ENCODE measurements at regions of chr3 and their contacts with region 1.

Region 1: GRCh38 chr3:170307671-170308403 is 49.7 kb upstream of the SKIL start:
- DNase-seq: no peak
- ATAC-seq: no peak
- H3K4me3 ChIP-seq: no peak overlapping the region
- H3K27ac ChIP-seq: no peak overlapping the region
- H3K4me1 ChIP-seq: no peaks in the 10 kb centered on the region
- H3K27me3 ChIP-seq: no peaks in the 10 kb centered on the region
- CTCF ChIP-seq: no peak

Region 2: GRCh38 chr3:170357176-170357919 is 49.5 kb after region 1 on chr3 and contains the start of gene SKIL:
- intact Hi-C with region 1: loop called in 1 of 2 experiments (anchors 5 kb)
- DNase-seq: peak; percentile 98 to 99
- ATAC-seq: peak; percentile 85 to 88 (median 86)
- H3K4me3 ChIP-seq: peak within 1 kb of the TSS; percentile 82
- H3K27ac ChIP-seq: peak within 1 kb of the TSS; percentile 93
- H3K4me1 ChIP-seq: peaks cover 28% of the 10 kb centered on the region
- H3K27me3 ChIP-seq: no peaks in the 10 kb centered on the region
- CTCF ChIP-seq: peak; percentile 31
- total RNA-seq, gene SKIL: 30.1 to 46.6 (median 40.2) TPM

Region 3: DNA sequence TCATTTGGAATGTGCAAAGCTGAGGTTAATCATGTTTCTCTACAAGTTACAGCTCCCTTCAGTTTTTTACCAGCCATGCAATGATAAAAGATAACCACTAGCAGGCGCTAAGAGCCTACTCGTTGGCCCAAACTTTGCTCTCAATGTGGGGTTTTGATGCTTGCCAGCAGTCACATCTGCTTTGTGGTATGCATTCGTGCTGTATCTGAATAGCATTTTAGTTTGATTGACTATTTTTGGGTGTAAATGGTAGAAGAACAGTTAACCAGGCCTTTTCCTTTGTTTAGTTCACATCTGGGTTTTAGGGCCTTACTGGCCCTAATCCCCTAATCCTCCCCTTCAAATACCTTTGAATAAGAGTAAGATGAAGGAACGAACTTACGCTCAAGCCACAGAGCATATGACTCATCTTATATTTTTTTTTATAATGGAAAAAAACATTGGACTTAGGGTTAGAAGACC is 106.4 kb after region 1 on chr3:
- intact Hi-C with region 1: loop called (anchors 2 to 5 kb)
- DNase-seq: no peak
- ATAC-seq: peak in 3 of 4 donors; percentile 46 to 74 (median 52)
- H3K4me3 ChIP-seq: no peak overlapping the region
- H3K27ac ChIP-seq: no peak overlapping the region
- H3K4me1 ChIP-seq: peaks cover 8% of the 10 kb centered on the region
- H3K27me3 ChIP-seq: peaks cover 0 to 30% (median 7%) of the 10 kb centered on the region in 3 donors
- CTCF ChIP-seq: peak; percentile 83

Region 4: DNA sequence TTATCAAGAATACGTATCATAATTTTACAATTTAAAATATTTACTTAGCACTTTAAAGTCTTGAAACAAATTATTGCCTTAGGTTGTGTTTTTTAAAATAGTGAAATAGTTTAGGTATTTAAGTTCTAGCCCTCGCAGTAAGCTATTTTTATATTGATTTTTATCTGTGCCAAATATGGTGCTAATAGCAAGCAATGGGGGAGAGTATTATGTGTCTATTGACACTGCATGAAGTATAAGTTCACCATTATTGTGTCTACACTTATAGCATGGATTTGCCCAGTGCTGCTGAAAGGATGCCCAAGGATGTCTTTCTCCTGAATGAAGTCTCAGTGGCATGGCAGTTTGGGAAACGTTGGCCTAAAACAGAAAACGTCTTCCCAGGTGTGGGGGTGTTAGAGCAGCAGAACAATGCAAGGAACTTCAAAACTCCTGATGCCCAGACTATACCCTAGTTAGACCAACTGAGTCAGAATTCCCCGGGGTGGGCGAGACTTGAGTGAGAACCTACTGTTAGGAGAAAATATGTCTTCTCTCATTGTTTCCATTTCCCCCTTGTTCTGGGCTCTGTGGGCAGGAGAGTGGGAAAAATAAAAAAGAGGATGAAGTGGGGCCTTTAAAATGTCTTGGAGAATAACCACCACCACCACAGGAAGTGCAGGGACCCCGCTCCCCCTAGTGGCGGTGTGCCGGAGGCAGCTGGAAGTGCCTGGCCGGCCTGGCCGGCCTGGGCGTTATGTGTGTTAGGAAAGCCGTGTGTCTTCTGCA is 382.2 kb after region 1 on chr3:
- intact Hi-C with region 1: loop called in 1 of 2 experiments (anchors 2 kb)
- DNase-seq: peak; percentile 69 to 79
- ATAC-seq: peak; percentile 71 to 91 (median 80)
- H3K4me3 ChIP-seq: no peak overlapping the region
- H3K27ac ChIP-seq: no peak overlapping the region
- H3K4me1 ChIP-seq: peaks cover 10% of the 10 kb centered on the region
- H3K27me3 ChIP-seq: no peaks in the 10 kb centered on the region
- CTCF ChIP-seq: peak; percentile 59

Region 5: GRCh38 chr3:170811928-170812591 is 504.2 kb after region 1 on chr3:
- intact Hi-C with region 1: loop called (anchors 2 to 10 kb)
- DNase-seq: peak; percentile 23 to 56
- ATAC-seq: peak in 3 of 4 donors; percentile 74 to 79 (median 77)
- H3K4me3 ChIP-seq: no peak overlapping the region
- H3K27ac ChIP-seq: no peak overlapping the region
- H3K4me1 ChIP-seq: no peaks in the 10 kb centered on the region
- H3K27me3 ChIP-seq: no peaks in the 10 kb centered on the region
- CTCF ChIP-seq: peak; percentile 73

Measured in psoas muscle (tissue), 8 donors.